ENCODE measurements at regions of chr7 and their contacts with region 1.

Region 1: GRCh38 chr7:102404005-102404861 is 8.1 kb downstream of the PRKRIP1 start:
- DNase-seq: peak; percentile 28
- H3K4me3 ChIP-seq: no peak overlapping the region
- H3K27ac ChIP-seq: no peak overlapping the region
- H3K4me1 ChIP-seq: no peaks in the 10 kb centered on the region
- H3K27me3 ChIP-seq: no peaks in the 10 kb centered on the region
- CTCF ChIP-seq: peak; percentile 55 to 73 (median 72)
- EP300 ChIP-seq: no peak
- POLR2A ChIP-seq: no peak

Region 2: GRCh38 chr7:102450242-102450641 is 46.0 kb after region 1 on chr7:
- in situ Hi-C with region 1: loop called in 1 of 4 experiments (anchors 10 kb)
- intact Hi-C with region 1: no loop called
- DNase-seq: peak; percentile 48
- H3K4me3 ChIP-seq: no peak overlapping the region
- H3K27ac ChIP-seq: no peak overlapping the region
- H3K4me1 ChIP-seq: no peaks in the 10 kb centered on the region
- H3K27me3 ChIP-seq: no peaks in the 10 kb centered on the region
- CTCF ChIP-seq: peak in 1 of 5 experiments; percentile 8
- EP300 ChIP-seq: no peak
- POLR2A ChIP-seq: no peak

Region 3: DNA sequence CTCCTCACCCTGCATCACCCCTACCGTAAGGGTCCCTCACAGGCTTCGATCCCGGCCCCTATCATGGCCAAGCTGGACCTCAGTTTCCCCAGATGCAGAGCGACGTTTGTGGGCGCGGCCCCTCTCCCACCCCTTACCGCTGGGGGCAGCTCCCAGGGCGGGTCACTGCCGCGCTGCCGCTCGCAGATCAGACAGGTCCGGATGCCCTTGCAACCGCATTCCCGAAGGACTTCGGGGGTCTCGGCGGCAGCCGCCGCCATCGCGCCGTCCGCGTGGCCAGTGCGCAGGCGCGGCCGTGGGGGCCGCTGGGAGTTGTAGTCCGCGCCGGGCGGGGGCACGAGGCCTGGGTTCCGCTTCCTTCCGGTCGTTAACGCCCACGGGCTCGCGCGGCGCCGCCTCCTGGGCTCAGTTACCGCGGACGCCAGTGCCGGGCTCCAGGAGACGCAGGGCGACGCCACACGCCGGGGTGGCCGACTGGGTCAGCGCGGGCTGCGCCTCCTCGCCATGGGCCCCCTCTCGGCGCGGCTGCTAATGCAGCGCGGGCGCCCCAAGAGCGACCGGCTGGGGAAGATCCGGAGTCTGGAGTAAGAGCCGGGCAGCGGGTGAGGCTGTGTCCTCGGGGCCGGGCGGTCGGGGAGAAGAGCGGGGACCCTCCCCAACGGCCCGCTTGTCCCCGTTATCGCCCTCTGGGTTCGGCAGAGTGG is 60.5 kb after region 1 on chr7 and contains the starts of genes ALKBH4 and LRWD1:
- in situ Hi-C with region 1: loop called in 2 of 4 experiments (anchors 10 kb)
- intact Hi-C with region 1: no loop called
- DNase-seq: peak; percentile 95
- H3K4me3 ChIP-seq: peak within 1 kb of the TSS; percentile 61 to 100 (median 95)
- H3K27ac ChIP-seq: peak within 1 kb of the TSS; percentile 81 to 91 (median 84)
- H3K4me1 ChIP-seq: peaks cover 14 to 26% (median 17%) of the 10 kb centered on the region in 4 donors
- H3K27me3 ChIP-seq: no peaks in the 10 kb centered on the region
- CTCF ChIP-seq: peak in 2 of 5 experiments; percentile 18 to 25
- EP300 ChIP-seq: no peak
- POLR2A ChIP-seq: peak; percentile 59
- total RNA-seq, gene ALKBH4: 1.8 to 21.3 (median 14.0) TPM
- total RNA-seq, gene LRWD1: 15.7 to 45.6 (median 18.4) TPM

Measured in transverse colon (tissue), 4 donors.